Sigmoid colon (tissue), 7 donors: ENCODE measurements at regions of chr4 and their contacts with region 1.

Region 1: GRCh38 chr4:105520817-105521790 is 31.3 kb upstream of the ARHGEF38 start:
- DNase-seq: no peak
- H3K4me3 ChIP-seq: no peak overlapping the region
- H3K27ac ChIP-seq: no peak overlapping the region
- H3K4me1 ChIP-seq: no peaks in the 10 kb centered on the region
- H3K27me3 ChIP-seq: no peaks in the 10 kb centered on the region
- CTCF ChIP-seq: peak; percentile 22 to 54 (median 49)
- EP300 ChIP-seq: no peak
- POLR2A ChIP-seq: no peak

Region 2: DNA sequence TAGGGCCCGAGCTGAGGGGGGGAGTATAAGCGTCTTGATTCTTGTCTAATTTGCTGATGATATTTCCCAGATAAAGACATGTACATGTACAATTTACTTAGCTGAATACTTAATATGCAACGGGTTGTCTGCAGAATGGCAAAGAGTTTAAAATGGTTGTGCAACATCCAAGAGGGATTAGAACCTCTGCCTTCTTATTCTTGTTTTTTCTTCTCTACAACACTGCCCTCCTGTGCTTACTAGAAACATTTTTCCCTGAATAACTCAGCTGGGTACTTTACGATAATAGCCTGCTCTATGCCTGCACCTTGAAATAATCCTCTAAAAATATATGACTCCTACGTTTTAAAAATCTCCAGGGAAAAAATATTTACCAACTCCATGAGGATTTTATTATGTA is 145.6 kb after region 1 on chr4:
- intact Hi-C with region 1: loop called (anchors 10 kb)
- DNase-seq: no peak
- H3K4me3 ChIP-seq: no peak overlapping the region
- H3K27ac ChIP-seq: no peak overlapping the region
- H3K4me1 ChIP-seq: no peaks in the 10 kb centered on the region
- H3K27me3 ChIP-seq: no peaks in the 10 kb centered on the region
- CTCF ChIP-seq: no peak
- EP300 ChIP-seq: no peak
- POLR2A ChIP-seq: no peak

Region 3: DNA sequence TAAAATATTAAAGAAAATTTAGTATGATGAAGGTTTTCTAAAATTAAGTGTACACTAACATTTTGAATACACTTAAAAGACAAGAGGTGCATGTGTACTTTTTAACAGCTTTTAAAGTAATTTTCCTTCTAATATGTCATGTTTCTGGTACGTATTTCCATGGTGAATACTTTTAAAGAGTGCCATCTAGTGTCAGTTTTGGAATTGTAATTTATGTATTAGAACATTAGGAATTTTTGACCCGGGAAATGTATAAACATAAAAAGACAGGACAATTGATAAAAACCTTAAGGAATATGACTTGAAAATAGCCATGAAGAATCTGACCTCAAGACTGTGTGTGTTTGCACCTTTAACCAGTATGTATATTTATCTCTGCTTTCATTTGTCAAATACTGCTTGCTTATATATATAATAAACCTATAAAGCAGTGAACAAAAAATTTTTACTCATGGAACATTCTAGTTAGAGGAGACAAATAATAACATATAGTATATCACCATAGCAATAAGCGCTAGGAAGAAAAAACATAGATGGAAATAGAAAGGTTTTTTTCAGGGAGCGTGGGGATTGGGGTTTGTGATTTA is 194.7 kb after region 1 on chr4:
- intact Hi-C with region 1: loop called (anchors 5 kb)
- DNase-seq: no peak
- H3K4me3 ChIP-seq: no peak overlapping the region
- H3K27ac ChIP-seq: no peak overlapping the region
- H3K4me1 ChIP-seq: peaks cover 0 to 8% (median 2%) of the 10 kb centered on the region in 4 donors
- H3K27me3 ChIP-seq: no peaks in the 10 kb centered on the region
- CTCF ChIP-seq: peak in 3 of 4 experiments; percentile 8 to 37 (median 20)
- EP300 ChIP-seq: no peak
- POLR2A ChIP-seq: no peak